Activated T-helper 2 cell treated with anti-CD3 and anti-CD28 coated beads, Interferon-gamma antibody, Interleukin-2, Interleukin-4, amounts not matched to agents 10 μg/mL and 5 μg/mL and 100 μg/mL, durations not matched to agents 14 hours and 24 hours and 36 hours (primary cell): ENCODE measurements at regions of chr22 and their contacts with region 1.

Region 1: GRCh38 chr22:46035742-46036557 is 59.0 kb upstream of the WNT7B start:
- DNase-seq: peak; percentile 99
- H3K4me3 Mint-ChIP-seq: peak overlapping the region; percentile 84
- H3K27ac Mint-ChIP-seq: peak overlapping the region; percentile 86
- H3K4me1 Mint-ChIP-seq: peaks cover 12% of the 10 kb centered on the region
- H3K27me3 Mint-ChIP-seq: no peaks in the 10 kb centered on the region

Region 2: DNA sequence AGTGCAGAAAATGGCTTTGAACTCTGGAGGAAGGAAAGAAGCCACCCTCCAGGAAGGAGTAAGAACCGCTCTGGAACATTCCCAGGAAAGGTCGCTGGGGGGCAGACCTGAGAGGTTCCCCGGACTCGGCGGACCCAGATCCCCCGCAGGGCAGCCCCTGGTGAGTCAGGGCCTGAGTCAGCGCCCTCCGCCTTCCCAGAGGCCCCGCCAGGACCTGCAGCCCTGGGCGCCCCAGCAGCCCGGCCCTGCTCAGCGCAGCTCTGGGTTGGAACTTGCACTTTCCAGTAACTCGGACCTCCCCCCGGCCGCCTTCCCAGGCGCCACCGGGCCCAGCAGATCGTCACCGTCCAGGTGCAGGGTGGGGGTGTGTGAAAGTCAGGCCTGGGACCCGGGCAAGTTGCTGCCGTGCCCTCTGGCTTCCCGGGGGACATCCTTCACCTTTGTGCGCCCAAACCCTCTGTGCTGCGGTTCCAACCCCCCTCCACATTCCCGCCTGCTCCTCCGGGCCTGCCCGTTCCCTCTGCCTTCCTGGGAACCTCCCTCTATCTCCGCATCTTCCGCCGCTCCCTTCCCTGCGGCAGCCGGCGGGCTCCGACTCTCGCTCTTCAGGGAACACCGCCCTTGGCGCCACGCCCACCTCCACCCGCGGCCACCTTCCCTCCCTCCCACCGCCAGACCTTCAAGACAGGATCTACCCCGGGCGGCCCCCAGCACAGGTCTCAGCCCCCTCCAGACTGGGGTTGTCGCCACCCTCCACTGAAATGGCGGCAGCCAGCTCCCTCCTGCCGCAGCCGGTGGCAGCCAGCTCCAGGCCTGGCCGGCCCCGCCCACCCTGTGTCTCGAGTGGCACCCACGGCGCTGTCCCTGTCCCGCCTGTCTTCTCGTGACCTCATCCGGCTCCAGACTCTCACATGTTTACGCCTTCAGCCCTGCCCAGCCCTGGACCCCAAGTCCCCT is 22.2 kb before region 1 on chr22:
- intact Hi-C with region 1: loop called (anchors 1 kb)
- DNase-seq: peak; percentile 60
- H3K4me3 Mint-ChIP-seq: peak overlapping the region; percentile 83
- H3K27ac Mint-ChIP-seq: peak overlapping the region; percentile 77
- H3K4me1 Mint-ChIP-seq: peaks cover 5% of the 10 kb centered on the region
- H3K27me3 Mint-ChIP-seq: peaks cover 6% of the 10 kb centered on the region

Region 3: GRCh38 chr22:46025225-46025972 is 10.6 kb before region 1 on chr22:
- intact Hi-C with region 1: no loop called
- DNase-seq: no peak
- H3K4me3 Mint-ChIP-seq: no peak overlapping the region
- H3K27ac Mint-ChIP-seq: no peak overlapping the region
- H3K4me1 Mint-ChIP-seq: peaks cover 5% of the 10 kb centered on the region
- H3K27me3 Mint-ChIP-seq: peaks cover 48% of the 10 kb centered on the region

Region 4: DNA sequence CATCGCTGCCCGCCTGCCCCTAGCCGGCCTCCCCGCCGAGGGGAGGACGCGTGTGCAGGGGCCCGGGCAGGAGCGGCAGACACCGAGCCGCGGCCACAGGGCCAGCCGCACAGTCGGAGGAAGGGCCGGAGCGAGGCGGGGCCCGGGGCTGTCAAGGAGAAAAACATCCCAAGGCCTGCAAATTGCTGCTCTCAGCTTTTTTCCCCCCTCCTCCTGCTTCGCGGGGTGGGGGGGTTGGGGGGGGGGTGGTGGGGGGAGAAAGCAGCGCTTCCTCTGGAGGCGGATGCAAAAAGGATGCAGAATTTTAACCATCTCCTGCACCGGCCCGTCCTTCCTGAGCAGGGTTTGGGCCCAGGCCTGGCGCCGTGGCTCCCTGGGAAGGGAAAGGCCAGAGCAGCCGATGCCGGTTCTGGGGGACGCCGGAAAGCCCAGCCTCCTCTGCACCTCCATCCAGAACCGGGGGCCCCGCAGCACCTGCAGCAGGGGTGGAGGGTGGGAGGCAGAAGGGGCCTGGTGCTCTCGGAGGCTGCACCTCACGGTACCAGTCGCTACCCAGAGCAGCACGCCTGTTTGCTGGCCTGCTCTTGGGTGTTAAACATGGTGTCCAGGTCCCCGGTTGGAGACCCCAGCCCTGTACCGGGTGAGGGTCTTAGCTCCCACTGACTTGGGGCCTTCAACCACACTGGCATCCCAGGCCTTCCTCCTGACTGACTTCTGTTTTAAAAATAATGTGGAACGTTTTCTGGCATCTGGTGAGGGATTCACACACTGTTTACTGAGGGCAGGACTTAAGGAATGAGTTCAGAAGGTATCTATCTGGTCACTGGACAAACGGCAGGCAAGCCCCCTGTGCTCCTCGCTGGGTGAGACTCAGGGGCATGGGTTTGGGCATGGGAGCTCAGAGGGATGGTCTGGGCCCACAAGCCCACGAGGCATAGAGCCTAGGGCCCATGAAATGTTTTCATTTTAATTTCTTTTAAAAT is 18.4 kb after region 1 on chr22:
- intact Hi-C with region 1: loop called (anchors 2 kb)
- DNase-seq: peak; percentile 41
- H3K4me3 Mint-ChIP-seq: peak overlapping the region; percentile 84
- H3K27ac Mint-ChIP-seq: peak overlapping the region; percentile 95
- H3K4me1 Mint-ChIP-seq: peaks cover 34% of the 10 kb centered on the region
- H3K27me3 Mint-ChIP-seq: no peaks in the 10 kb centered on the region

Region 5: GRCh38 chr22:46071451-46072109 is 35.6 kb after region 1 on chr22:
- intact Hi-C with region 1: loop called (anchors 5 kb)
- DNase-seq: peak; percentile 33
- H3K4me3 Mint-ChIP-seq: peak overlapping the region; percentile 84
- H3K27ac Mint-ChIP-seq: peak overlapping the region; percentile 86
- H3K4me1 Mint-ChIP-seq: peaks cover 42% of the 10 kb centered on the region
- H3K27me3 Mint-ChIP-seq: no peaks in the 10 kb centered on the region